Caco-2 (cell line): ENCODE measurements at regions of chr19 and their contacts with region 1.

Region 1: DNA sequence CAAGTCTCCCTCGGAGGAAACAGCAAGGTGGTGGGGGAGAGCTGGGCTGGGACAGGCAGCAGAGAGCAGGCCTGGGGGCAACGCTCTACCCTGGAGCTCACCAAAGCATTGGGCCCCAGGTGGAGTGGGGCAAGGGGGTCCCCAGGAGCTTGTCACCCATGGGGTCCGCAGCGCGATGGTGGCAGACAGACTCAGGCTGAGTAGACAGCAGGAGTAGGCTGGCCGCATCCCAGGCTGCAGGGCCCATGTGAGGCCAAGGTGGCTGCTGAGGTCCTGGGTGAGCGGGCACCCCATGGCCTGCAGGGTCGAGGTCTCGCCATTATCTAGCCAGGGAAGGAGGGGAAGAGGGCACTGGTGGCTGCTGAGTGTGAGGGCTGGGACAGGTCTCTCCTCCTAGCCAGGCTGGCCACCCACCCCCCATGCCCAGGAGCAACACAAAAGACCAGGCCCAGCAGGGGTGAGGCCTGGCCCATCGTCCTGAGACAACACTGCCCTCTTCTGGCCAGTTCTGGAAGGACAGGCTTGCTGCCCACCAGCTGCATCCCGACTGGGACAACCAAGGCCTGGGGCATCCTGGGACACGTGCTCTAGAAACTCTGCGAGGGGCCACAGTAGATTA is 33.1 kb downstream of the CEBPG start:
- DNase-seq: peak; percentile 82 to 90
- H3K4me3 ChIP-seq: no peak overlapping the region
- H3K4me3 Mint-ChIP-seq: no peak overlapping the region
- H3K27ac Mint-ChIP-seq: peak overlapping the region; percentile 84
- H3K4me1 ChIP-seq: peaks cover 35% of the 10 kb centered on the region
- H3K4me1 Mint-ChIP-seq: peaks cover 31% of the 10 kb centered on the region
- H3K27me3 ChIP-seq: no peaks in the 10 kb centered on the region
- H3K27me3 Mint-ChIP-seq: no peaks in the 10 kb centered on the region
- CTCF ChIP-seq: peak; percentile 90 to 96

Region 2: DNA sequence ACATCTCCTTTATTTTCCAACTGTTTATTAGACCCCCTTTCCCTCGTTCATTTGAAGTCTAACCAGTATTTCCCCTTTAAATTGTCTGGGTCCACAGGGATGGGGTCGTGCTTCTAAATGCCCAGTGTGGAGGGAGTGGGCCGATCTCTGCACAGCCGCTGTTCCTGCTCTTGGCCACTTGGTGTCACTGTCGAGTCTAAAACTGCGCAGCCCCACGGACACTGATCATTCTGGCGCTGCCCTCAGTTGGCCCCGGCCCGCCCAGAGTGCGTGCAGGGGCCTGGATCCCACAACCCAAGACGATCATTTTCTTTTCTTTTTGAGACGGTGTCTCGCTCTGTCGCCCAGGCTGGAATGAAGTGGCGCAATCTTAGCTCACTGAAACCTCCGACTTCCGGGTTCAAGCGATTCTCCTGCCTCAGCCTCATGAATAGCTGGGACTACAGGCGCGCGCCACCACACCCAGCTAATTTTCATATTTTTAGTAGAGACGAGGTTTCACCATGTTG is 262.7 kb before region 1 on chr19:
- CTCF ChIA-PET with region 1: no interaction called
- POLR2A ChIA-PET with region 1: no interaction called
- intact Hi-C with region 1: loop called (anchors 5 kb)
- DNase-seq: peak; percentile 63 to 75
- H3K4me3 ChIP-seq: no peak overlapping the region
- H3K4me3 Mint-ChIP-seq: no peak overlapping the region
- H3K27ac Mint-ChIP-seq: no peak overlapping the region
- H3K4me1 ChIP-seq: peaks cover 17% of the 10 kb centered on the region
- H3K4me1 Mint-ChIP-seq: peaks cover 10% of the 10 kb centered on the region
- H3K27me3 ChIP-seq: no peaks in the 10 kb centered on the region
- H3K27me3 Mint-ChIP-seq: no peaks in the 10 kb centered on the region
- CTCF ChIP-seq: peak; percentile 95 to 96

Region 3: GRCh38 chr19:33241530-33242101 is 165.0 kb before region 1 on chr19:
- CTCF ChIA-PET with region 1: interaction called, 33 read pairs
- POLR2A ChIA-PET with region 1: interaction called, 3 read pairs
- intact Hi-C with region 1: loop called (anchors 1 kb)
- DNase-seq: peak in 1 of 2 experiments; percentile 60
- H3K4me3 ChIP-seq: no peak overlapping the region
- H3K4me3 Mint-ChIP-seq: no peak overlapping the region
- H3K27ac Mint-ChIP-seq: no peak overlapping the region
- H3K4me1 ChIP-seq: peaks cover 11% of the 10 kb centered on the region; the same call in 1 of the 2 replicates
- H3K4me1 Mint-ChIP-seq: peaks cover 6% of the 10 kb centered on the region
- H3K27me3 ChIP-seq: no peaks in the 10 kb centered on the region
- H3K27me3 Mint-ChIP-seq: no peaks in the 10 kb centered on the region
- CTCF ChIP-seq: peak; percentile 77 to 94

Region 4: GRCh38 chr19:33292595-33293441 is 113.8 kb before region 1 on chr19:
- CTCF ChIA-PET with region 1: interaction called, 3 read pairs
- POLR2A ChIA-PET with region 1: no interaction called
- intact Hi-C with region 1: loop called (anchors 2 kb)
- DNase-seq: no peak
- H3K4me3 ChIP-seq: no peak overlapping the region
- H3K4me3 Mint-ChIP-seq: peak overlapping the region; percentile 69
- H3K27ac Mint-ChIP-seq: peak overlapping the region; percentile 97
- H3K4me1 ChIP-seq: peaks cover 62% of the 10 kb centered on the region
- H3K4me1 Mint-ChIP-seq: peaks cover 41% of the 10 kb centered on the region
- H3K27me3 ChIP-seq: no peaks in the 10 kb centered on the region
- H3K27me3 Mint-ChIP-seq: no peaks in the 10 kb centered on the region
- CTCF ChIP-seq: no peak

Region 5: GRCh38 chr19:33368074-33368864 is 38.4 kb before region 1 on chr19:
- CTCF ChIA-PET with region 1: interaction called, 18 read pairs
- POLR2A ChIA-PET with region 1: interaction called, 20 read pairs
- intact Hi-C with region 1: loop called (anchors 1 kb)
- DNase-seq: no peak
- H3K4me3 ChIP-seq: no peak overlapping the region
- H3K4me3 Mint-ChIP-seq: no peak overlapping the region
- H3K27ac Mint-ChIP-seq: peak overlapping the region; percentile 73
- H3K4me1 ChIP-seq: peaks cover 48% of the 10 kb centered on the region
- H3K4me1 Mint-ChIP-seq: peaks cover 49% of the 10 kb centered on the region
- H3K27me3 ChIP-seq: no peaks in the 10 kb centered on the region
- H3K27me3 Mint-ChIP-seq: no peaks in the 10 kb centered on the region
- CTCF ChIP-seq: no peak